CD8-positive, alpha-beta T cell (primary cell): ENCODE measurements at regions of chr1 and their contacts with region 1.

Region 1: GRCh38 chr1:62175568-62176179 is 19.0 kb upstream of the L1TD1 start:
- DNase-seq: peak in 5 of 9 experiments; percentile 1 to 62 (median 48)
- ATAC-seq: no peak
- H3K4me3 ChIP-seq: no peak overlapping the region
- H3K4me3 Mint-ChIP-seq: no peak overlapping the region
- H3K27ac ChIP-seq: no peak overlapping the region
- H3K27ac Mint-ChIP-seq: no peak overlapping the region
- H3K4me1 ChIP-seq: no peaks in the 10 kb centered on the region
- H3K4me1 Mint-ChIP-seq: no peaks in the 10 kb centered on the region
- H3K27me3 ChIP-seq: peaks cover 0 to 2% of the 10 kb centered on the region in 2 experiments
- H3K27me3 Mint-ChIP-seq: peaks cover 11% of the 10 kb centered on the region
- CTCF ChIP-seq: peak; percentile 78

Region 2: GRCh38 chr1:62318756-62319544 is 143.3 kb after region 1 on chr1 and contains the start of gene KANK4:
- CTCF ChIA-PET with region 1: no interaction called
- POLR2A ChIA-PET with region 1: no interaction called
- intact Hi-C with region 1: no loop called
- DNase-seq: no peak
- ATAC-seq: no peak
- H3K4me3 ChIP-seq: no peak within 1 kb of the TSS
- H3K4me3 Mint-ChIP-seq: peak within 1 kb of the TSS; percentile 32
- H3K27ac ChIP-seq: no peak within 1 kb of the TSS
- H3K27ac Mint-ChIP-seq: no peak within 1 kb of the TSS
- H3K4me1 ChIP-seq: no peaks in the 10 kb centered on the region
- H3K4me1 Mint-ChIP-seq: peaks cover 5% of the 10 kb centered on the region
- H3K27me3 ChIP-seq: peaks cover 0 to 3% of the 10 kb centered on the region in 2 experiments
- H3K27me3 Mint-ChIP-seq: peaks cover 33% of the 10 kb centered on the region
- CTCF ChIP-seq: no peak
- total RNA-seq, gene KANK4: not detected

Region 3: GRCh38 chr1:62746085-62746808 is 570.6 kb after region 1 on chr1:
- CTCF ChIA-PET with region 1: interaction called, 18 read pairs
- POLR2A ChIA-PET with region 1: no interaction called
- intact Hi-C with region 1: loop called in 1 of 2 experiments (anchors 1 kb)
- DNase-seq: peak in 2 of 9 experiments; percentile 44 to 59
- ATAC-seq: no peak
- H3K4me3 ChIP-seq: no peak overlapping the region
- H3K4me3 Mint-ChIP-seq: no peak overlapping the region
- H3K27ac ChIP-seq: no peak overlapping the region
- H3K27ac Mint-ChIP-seq: no peak overlapping the region
- H3K4me1 ChIP-seq: no peaks in the 10 kb centered on the region
- H3K4me1 Mint-ChIP-seq: no peaks in the 10 kb centered on the region
- H3K27me3 ChIP-seq: no peaks in the 10 kb centered on the region
- H3K27me3 Mint-ChIP-seq: peaks cover 5% of the 10 kb centered on the region
- CTCF ChIP-seq: peak; percentile 70

Region 4: GRCh38 chr1:63759778-63760177 is 1584.1 kb after region 1 on chr1:
- CTCF ChIA-PET with region 1: no interaction called
- POLR2A ChIA-PET with region 1: no interaction called
- intact Hi-C with region 1: loop called in 1 of 2 experiments (anchors 10 kb)
- DNase-seq: no peak
- ATAC-seq: no peak
- H3K4me3 ChIP-seq: no peak overlapping the region
- H3K4me3 Mint-ChIP-seq: no peak overlapping the region
- H3K27ac ChIP-seq: no peak overlapping the region
- H3K27ac Mint-ChIP-seq: no peak overlapping the region
- H3K4me1 ChIP-seq: no peaks in the 10 kb centered on the region
- H3K4me1 Mint-ChIP-seq: no peaks in the 10 kb centered on the region
- H3K27me3 ChIP-seq: no peaks in the 10 kb centered on the region
- H3K27me3 Mint-ChIP-seq: peaks cover 4% of the 10 kb centered on the region
- CTCF ChIP-seq: no peak